ENCODE measurements at regions of chr21 and their contacts with region 1.

Region 1: GRCh38 chr21:34603002-34603709 is 11.8 kb downstream of the RCAN1 start:
- DNase-seq: peak; percentile 71
- ATAC-seq: peak; percentile 80
- H3K4me3 Mint-ChIP-seq: no peak overlapping the region
- H3K27ac Mint-ChIP-seq: no peak overlapping the region
- H3K4me1 Mint-ChIP-seq: no peaks in the 10 kb centered on the region
- H3K27me3 Mint-ChIP-seq: no peaks in the 10 kb centered on the region

Region 2: DNA sequence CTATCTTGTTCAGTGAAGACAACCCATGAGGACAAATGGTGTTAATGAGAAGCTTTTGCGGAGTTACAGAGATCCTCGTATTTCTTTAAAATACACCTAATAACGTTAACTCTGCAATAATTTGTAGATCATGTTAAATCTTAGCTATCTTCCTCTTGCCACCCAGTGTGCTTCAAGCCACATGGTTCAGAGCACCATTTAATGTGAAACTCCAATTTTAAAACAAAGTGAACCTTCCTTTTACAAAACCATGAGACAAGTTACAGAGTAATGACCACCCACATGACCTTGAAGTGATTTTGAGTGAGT is 241.1 kb before region 1 on chr21:
- CTCF ChIA-PET with region 1: interaction called, 13 read pairs
- DNase-seq: no peak
- ATAC-seq: no peak
- H3K4me3 Mint-ChIP-seq: no peak overlapping the region
- H3K27ac Mint-ChIP-seq: no peak overlapping the region
- H3K4me1 Mint-ChIP-seq: peaks cover 7% of the 10 kb centered on the region
- H3K27me3 Mint-ChIP-seq: peaks cover 42% of the 10 kb centered on the region

Region 3: GRCh38 chr21:34510148-34511142 is 92.7 kb before region 1 on chr21:
- CTCF ChIA-PET with region 1: interaction called, 10 read pairs
- DNase-seq: peak; percentile 58
- ATAC-seq: peak; percentile 68
- H3K4me3 Mint-ChIP-seq: no peak overlapping the region
- H3K27ac Mint-ChIP-seq: no peak overlapping the region
- H3K4me1 Mint-ChIP-seq: no peaks in the 10 kb centered on the region
- H3K27me3 Mint-ChIP-seq: peaks cover 5% of the 10 kb centered on the region

Region 4: DNA sequence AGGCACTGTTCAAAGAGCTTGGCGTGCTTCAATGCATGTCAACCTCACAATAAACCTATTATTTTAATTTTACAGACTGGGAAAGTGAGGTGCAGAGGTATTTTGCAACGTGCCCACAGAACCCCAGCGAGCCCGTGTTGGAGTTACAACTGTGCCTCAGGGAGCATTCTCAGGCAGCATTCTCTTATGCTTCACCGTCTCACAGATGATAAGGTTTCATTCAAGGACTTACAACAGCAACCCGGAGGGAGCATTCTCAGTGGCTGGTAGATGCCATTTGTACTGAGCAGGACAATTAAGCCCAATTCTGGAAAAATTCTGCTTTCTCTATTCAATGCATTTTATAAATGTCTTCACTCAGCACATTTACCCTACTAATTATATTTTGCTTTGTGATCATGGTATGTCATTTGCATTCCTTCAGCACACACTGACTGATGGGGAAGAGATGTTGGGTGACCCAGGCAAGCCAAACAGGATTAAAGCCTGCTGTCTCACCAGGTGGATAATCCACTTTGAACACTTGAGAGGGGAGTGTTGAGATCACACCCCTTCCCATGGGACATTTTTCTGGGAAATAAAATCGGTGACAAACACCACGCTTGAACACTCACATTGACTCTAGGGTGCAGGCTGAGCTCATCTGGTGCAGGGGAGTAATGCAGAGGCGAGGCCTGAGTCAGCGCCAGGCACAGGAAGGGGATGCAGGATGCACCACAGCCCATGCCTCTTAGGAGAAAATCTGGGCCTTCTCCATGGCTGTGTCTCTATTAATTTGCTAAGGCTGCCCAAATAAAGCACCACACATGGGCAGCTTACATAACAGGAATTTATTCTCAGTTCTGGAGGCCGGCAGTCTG is 179.6 kb after region 1 on chr21:
- CTCF ChIA-PET with region 1: no interaction called
- DNase-seq: no peak
- ATAC-seq: no peak
- H3K4me3 Mint-ChIP-seq: no peak overlapping the region
- H3K27ac Mint-ChIP-seq: no peak overlapping the region
- H3K4me1 Mint-ChIP-seq: peaks cover 3% of the 10 kb centered on the region
- H3K27me3 Mint-ChIP-seq: no peaks in the 10 kb centered on the region